ENCODE measurements at regions of chr7 and their contacts with region 1.

Region 1: GRCh38 chr7:142496545-142497041 is 238.7 kb upstream of the PRSS58 start:
- DNase-seq: peak; percentile 41
- H3K4me3 ChIP-seq: no peak overlapping the region
- H3K27ac ChIP-seq: no peak overlapping the region
- H3K4me1 ChIP-seq: no peaks in the 10 kb centered on the region
- H3K27me3 ChIP-seq: peaks cover 14 to 27% of the 10 kb centered on the region in 2 experiments
- CTCF ChIP-seq: peak; percentile 65 to 71
- POLR2A ChIP-seq: no peak

Region 2: GRCh38 chr7:141511676-141512396 is 984.8 kb before region 1 on chr7:
- CTCF ChIA-PET with region 1: no interaction called
- POLR2A ChIA-PET with region 1: no interaction called
- dilution Hi-C with region 1: no loop called
- intact Hi-C with region 1: no loop called
- DNase-seq: no peak
- H3K4me3 ChIP-seq: no peak overlapping the region
- H3K27ac ChIP-seq: no peak overlapping the region
- H3K4me1 ChIP-seq: no peaks in the 10 kb centered on the region
- H3K27me3 ChIP-seq: peaks cover 1 to 5% of the 10 kb centered on the region in 2 experiments
- CTCF ChIP-seq: no peak
- POLR2A ChIP-seq: no peak

Region 3: DNA sequence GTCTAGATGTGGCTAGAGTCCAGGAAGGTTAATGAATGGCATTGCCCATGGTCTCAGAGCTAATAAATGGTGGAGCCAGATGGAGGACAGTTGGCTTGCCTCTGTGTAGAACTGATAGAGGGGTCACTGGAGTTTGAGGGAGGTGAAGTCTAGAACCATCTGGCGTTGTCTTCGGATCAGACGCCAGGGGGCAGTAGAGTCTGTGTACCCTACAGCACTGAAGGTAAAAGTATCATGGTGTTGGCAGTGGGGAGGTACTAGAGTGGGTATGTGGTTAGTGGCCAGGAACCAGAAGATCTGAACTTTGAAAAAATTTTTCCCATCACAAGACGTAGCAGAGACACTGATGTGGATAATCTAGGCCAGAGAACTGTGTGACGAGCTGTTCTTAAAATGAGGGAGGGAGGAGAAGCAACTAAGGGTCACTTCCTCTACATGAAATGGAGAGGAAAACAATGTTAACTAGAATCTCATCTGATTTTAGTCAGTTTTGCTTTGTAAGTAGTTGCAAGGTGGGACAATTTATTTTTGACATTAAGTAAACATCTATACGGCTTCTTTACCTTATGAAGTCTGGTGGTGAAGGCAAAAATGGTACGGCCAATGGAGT is 10.9 kb before region 1 on chr7:
- CTCF ChIA-PET with region 1: interaction called, 27 read pairs
- POLR2A ChIA-PET with region 1: no interaction called
- dilution Hi-C with region 1: no loop called
- intact Hi-C with region 1: loop called (anchors 1 kb)
- DNase-seq: no peak
- H3K4me3 ChIP-seq: no peak overlapping the region
- H3K27ac ChIP-seq: no peak overlapping the region
- H3K4me1 ChIP-seq: no peaks in the 10 kb centered on the region
- H3K27me3 ChIP-seq: peaks cover 3 to 10% of the 10 kb centered on the region in 2 experiments
- CTCF ChIP-seq: peak; percentile 38 to 58
- POLR2A ChIP-seq: no peak

Region 4: DNA sequence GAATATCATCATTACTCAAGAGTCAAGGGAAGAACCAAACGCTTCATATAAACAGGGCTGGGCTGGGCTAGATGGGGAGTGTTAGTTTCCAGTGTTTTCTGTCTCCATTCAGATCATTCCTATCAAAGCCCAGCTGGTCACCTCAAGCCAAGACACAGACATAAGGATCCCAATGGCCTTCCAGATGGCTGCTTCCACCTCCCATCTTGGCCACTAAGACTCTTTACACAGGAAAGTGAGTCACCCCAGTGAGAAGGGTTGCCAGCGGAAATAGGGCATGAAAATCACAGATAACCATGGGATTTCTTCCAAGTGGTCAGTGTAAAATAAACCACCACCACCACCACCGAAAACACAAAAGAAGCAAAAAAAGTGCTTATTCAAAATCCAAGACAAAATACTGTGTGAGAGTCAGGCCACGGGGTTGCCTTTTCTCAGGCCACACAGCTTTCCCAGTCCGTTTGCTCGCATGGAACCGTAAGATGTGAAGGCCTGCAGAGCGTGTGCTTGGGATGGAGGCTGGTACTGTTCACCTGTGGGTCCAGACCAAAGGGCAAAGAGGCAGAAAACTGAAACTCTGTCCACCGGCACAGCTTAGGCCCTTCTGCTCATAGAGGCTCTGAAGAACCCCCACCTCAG is 279.7 kb after region 1 on chr7:
- CTCF ChIA-PET with region 1: no interaction called
- POLR2A ChIA-PET with region 1: no interaction called
- dilution Hi-C with region 1: no loop called
- intact Hi-C with region 1: no loop called
- DNase-seq: peak; percentile 93
- H3K4me3 ChIP-seq: no peak overlapping the region
- H3K27ac ChIP-seq: peak overlapping the region; percentile 56
- H3K4me1 ChIP-seq: peaks cover 13% of the 10 kb centered on the region
- H3K27me3 ChIP-seq: peaks cover 2 to 4% of the 10 kb centered on the region in 2 experiments
- CTCF ChIP-seq: no peak
- POLR2A ChIP-seq: peak; percentile 30

Measured in endothelial cell of umbilical vein (primary cell).